Dorsolateral prefrontal cortex (tissue), 120 donors: ENCODE measurements at regions of chr9 and their contacts with region 1.

Region 1: DNA sequence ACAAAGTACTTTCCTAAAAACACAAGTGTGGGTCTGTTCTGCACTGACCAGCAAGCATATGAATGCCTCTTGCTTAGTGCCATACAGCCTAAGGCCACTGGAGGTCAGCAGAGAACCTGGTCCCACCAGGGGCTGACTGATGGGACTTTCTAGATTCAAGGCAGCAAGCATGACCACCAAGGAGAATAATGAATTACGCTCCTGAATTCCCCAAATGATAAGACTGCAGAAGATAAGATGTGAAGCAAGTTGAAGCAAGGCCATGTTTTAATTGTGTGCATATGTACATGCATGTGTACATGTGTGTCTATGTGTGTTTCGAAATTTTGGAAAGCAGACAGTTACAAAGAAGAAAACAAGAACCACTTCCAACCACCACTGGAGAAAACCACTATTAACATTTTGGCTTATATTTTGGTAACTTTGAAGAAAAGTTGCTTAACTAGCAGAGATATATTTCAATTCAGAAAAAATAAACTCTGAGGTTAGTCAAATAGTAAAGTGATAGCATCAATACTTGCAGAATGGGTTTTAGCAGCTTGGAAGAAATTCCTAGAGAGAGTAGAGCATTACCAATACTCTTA is 70.5 kb downstream of the ERP44 start:
- DNase-seq: peak in 9 of 10 donors; percentile 42 to 77 (median 58)
- H3K4me3 ChIP-seq: no peak overlapping the region
- H3K27ac ChIP-seq: no peak overlapping the region
- H3K27me3 ChIP-seq: no peaks in the 10 kb centered on the region
- CTCF ChIP-seq: peak; percentile 46 to 95 (median 88)

Region 2: GRCh38 chr9:99690573-99690972 is 337.7 kb before region 1 on chr9:
- intact Hi-C with region 1: no loop called
- DNase-seq: peak in 7 of 10 donors; percentile 6 to 54 (median 39)
- H3K4me3 ChIP-seq: no peak overlapping the region
- H3K27ac ChIP-seq: no peak overlapping the region
- H3K27me3 ChIP-seq: no peaks in the 10 kb centered on the region
- CTCF ChIP-seq: no peak

Region 3: DNA sequence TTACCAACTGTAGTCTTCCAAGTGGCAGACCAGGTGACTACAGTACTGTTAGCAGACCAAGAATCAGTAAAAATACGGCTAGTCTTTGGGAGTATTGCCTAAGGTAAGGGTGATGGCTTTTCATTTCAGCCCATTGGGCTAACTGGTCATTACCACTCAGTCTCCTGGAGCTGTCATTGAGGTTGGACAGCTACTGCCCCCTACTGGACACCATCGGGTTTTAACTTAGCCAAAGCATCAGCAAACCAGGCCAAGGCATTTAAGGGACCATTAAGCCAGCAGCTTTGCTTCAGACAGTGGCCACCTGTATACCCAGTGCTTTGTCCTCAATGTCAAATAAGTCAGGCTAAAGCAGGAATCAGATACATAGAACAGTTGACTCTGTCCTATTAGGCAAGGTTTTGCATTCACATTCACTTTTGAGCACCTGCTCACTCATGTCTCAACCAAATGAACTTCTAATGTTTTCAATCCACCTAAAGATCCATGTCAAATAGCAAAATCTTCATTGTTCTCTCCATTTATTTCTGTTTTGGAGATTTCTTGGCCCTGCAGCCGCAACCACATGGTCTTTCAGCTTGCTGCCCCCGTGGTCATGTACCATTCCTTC is 188.0 kb after region 1 on chr9:
- intact Hi-C with region 1: loop called (anchors 5 to 10 kb)
- DNase-seq: peak in 3 of 10 donors; percentile 40 to 60 (median 49)
- H3K4me3 ChIP-seq: no peak overlapping the region
- H3K27ac ChIP-seq: no peak overlapping the region
- H3K27me3 ChIP-seq: no peaks in the 10 kb centered on the region
- CTCF ChIP-seq: peak; percentile 41 to 74 (median 61)

Region 4: GRCh38 chr9:100322954-100323536 is 294.8 kb after region 1 on chr9:
- intact Hi-C with region 1: loop called in 1 of 2 experiments (anchors 10 kb)
- DNase-seq: peak in 3 of 10 donors; percentile 14 to 56 (median 31)
- H3K4me3 ChIP-seq: no peak overlapping the region
- H3K27ac ChIP-seq: no peak overlapping the region
- H3K27me3 ChIP-seq: no peaks in the 10 kb centered on the region
- CTCF ChIP-seq: peak; percentile 47 to 88 (median 72)